ENCODE measurements at regions of chr17 and their contacts with region 1.

Region 1: DNA sequence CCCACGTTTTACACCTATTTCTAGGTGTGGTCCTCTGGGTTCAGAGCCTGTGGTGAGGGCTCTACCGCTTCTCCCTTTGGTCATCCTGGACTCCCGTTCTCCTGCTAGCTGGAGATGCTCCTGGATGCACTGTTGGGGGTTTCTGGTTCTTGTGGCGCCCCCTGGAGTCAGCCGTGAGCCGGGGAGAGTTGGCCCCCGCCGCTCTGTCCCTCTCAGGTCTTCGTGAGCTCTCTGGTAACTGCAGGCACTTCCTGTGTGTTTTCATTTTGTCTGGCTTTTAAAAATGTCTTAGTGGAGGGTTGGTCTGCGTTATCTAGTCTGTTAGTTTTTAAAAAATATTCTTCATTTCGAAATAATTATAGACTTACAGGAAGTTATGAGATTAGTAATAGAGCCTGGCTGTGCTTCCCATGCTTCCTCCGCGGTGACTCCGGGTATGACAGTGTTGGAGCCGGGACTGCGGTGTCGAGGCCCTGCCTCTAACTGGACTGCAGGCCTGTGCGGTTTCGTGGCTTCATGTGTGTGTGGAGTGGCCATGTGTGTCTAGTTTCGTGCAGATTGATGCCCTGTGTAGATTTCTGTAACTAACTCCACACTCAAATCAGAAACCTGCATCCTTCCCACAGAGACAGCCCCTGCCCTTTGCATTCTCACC is 78.0 kb upstream of the ZNF750 start:
- DNase-seq: peak; percentile 66
- H3K4me3 ChIP-seq: no peak overlapping the region
- H3K27ac ChIP-seq: no peak overlapping the region
- H3K4me1 ChIP-seq: peaks cover 51% of the 10 kb centered on the region
- CTCF ChIP-seq: peak; percentile 94

Region 2: DNA sequence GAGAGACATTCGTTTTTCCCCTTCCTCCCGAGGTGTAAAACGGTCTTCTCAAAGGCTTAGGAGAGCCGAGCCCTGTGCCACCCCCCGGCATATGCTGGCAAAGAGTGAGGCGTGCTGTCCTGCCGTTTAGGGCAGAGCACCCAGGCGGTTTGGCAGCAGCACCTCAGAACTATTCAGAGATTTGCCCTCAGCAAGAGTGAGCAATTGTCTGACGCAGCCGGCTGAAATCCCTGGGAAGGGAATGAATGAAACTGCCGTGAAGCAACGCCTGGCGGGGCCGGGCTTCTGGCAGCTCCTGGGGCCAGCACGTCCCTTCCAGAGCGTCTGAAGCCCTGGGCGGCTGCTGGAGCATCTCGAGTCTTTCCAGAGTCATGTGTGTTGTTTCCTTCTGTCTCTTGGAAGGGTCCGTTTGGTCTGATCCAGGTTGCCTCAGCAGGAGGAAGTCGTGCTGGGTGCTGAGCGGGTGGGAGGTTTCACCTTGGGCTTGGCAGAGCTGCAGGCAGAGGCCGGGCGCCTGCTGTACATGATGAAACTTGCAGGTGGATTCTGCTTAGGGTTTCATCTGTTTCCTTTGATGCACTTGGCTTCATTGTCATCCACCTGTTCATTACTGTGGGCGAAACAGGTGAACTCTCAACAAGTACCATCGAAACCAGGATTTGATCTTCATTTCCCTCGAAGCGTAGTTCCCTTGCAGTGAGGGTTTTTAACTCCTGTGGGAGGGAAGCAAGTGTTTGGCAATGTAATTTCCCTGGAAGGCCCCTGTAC is 130.6 kb before region 1 on chr17:
- CTCF ChIA-PET with region 1: interaction called, 11 read pairs
- POLR2A ChIA-PET with region 1: interaction called, 5 read pairs
- intact Hi-C with region 1: loop called (anchors 1 kb)
- DNase-seq: peak; percentile 97
- H3K4me3 ChIP-seq: peak overlapping the region; percentile 16
- H3K27ac ChIP-seq: peak overlapping the region; percentile 84
- H3K4me1 ChIP-seq: peaks cover 39% of the 10 kb centered on the region
- CTCF ChIP-seq: no peak

Region 3: GRCh38 chr17:82871056-82871903 is 46.5 kb before region 1 on chr17:
- CTCF ChIA-PET with region 1: interaction called, 6 read pairs
- POLR2A ChIA-PET with region 1: no interaction called
- intact Hi-C with region 1: loop called (anchors 1 kb)
- DNase-seq: peak; percentile 99
- H3K4me3 ChIP-seq: peak overlapping the region; percentile 51
- H3K27ac ChIP-seq: peak overlapping the region; percentile 95
- H3K4me1 ChIP-seq: peaks cover 76% of the 10 kb centered on the region
- CTCF ChIP-seq: peak; percentile 83

Region 4: DNA sequence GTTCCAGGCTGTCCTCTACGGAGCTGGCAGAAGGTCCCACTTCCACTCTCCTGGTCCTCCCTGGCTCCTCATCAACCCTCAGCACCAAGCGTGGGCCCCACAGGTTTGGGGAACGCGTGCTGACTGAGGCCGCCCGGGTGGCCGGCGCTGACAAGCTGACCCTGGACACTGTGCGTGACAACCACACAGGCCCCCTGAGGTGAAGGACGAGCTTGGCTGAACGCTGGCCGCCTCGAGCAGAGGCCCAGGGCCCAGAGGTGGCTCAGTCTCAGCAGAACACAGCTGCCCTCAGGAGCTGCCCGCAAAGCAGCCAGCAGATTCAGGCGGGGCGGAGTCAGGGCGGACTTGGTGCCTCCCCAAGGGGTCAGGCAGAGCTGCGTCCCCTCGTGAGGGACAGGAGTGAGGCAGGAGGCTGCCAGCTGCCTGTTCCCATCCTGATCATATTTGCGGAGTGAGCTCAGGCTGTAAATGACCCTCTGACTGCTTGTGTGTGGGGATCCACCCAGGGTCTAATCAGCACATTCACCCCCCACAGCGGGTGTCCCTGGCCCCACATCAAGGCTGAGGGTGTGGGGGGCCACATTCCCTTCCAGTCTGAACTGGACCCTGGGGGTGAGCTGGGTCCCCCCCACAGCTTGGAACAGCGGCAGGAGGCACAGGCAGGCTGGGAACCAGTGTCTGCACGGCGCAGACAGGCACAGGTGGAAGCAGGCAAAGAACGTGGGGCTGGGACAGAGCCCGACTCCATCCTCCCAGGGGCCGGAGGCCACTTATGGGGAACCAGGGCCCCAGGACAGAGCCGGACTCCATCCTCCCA is 56.5 kb after region 1 on chr17:
- CTCF ChIA-PET with region 1: interaction called, 3 read pairs
- POLR2A ChIA-PET with region 1: interaction called, 3 read pairs
- intact Hi-C with region 1: loop called (anchors 1 kb)
- DNase-seq: no peak
- H3K4me3 ChIP-seq: no peak overlapping the region
- H3K27ac ChIP-seq: no peak overlapping the region
- H3K4me1 ChIP-seq: peaks cover 40% of the 10 kb centered on the region
- CTCF ChIP-seq: no peak

Region 5: GRCh38 chr17:83083323-83084201 is 165.7 kb after region 1 on chr17:
- CTCF ChIA-PET with region 1: interaction called, 4 read pairs
- POLR2A ChIA-PET with region 1: interaction called, 4 read pairs
- intact Hi-C with region 1: loop called (anchors 5 kb)
- DNase-seq: no peak
- H3K4me3 ChIP-seq: no peak overlapping the region
- H3K27ac ChIP-seq: no peak overlapping the region
- H3K4me1 ChIP-seq: peaks cover 30% of the 10 kb centered on the region
- CTCF ChIP-seq: no peak